A549 (cell line): ENCODE measurements at regions of chr1 and their contacts with region 1.

Region 1: DNA sequence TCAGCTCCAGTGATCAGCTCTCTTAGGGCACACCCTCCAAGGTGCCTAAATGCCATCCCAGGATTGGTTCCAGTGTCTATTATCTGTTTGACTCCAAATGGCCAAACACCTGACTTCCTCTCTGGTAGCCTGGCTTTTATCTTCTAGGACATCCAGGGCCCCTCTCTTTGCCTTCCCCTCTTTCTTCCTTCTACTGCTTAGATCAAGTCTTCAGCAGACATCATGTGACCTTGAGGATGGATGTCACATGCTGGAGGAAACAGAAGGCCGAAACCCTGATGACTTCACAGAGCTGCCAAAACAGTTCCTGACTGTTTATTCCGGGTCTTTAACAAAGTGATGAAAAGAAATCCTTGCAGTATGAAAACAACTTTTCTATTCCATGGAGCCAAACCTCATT is 24.4 kb upstream of the WDR26 start:
- DNase-seq: no peak
- ATAC-seq: no peak
- H3K4me3 ChIP-seq: no peak overlapping the region
- H3K27ac ChIP-seq: no peak overlapping the region
- H3K4me1 ChIP-seq: peaks cover 9% of the 10 kb centered on the region
- CTCF ChIP-seq: no peak
- EP300 ChIP-seq: no peak
- POLR2A ChIP-seq: no peak
- RAD21 ChIP-seq: no peak

Region 2: DNA sequence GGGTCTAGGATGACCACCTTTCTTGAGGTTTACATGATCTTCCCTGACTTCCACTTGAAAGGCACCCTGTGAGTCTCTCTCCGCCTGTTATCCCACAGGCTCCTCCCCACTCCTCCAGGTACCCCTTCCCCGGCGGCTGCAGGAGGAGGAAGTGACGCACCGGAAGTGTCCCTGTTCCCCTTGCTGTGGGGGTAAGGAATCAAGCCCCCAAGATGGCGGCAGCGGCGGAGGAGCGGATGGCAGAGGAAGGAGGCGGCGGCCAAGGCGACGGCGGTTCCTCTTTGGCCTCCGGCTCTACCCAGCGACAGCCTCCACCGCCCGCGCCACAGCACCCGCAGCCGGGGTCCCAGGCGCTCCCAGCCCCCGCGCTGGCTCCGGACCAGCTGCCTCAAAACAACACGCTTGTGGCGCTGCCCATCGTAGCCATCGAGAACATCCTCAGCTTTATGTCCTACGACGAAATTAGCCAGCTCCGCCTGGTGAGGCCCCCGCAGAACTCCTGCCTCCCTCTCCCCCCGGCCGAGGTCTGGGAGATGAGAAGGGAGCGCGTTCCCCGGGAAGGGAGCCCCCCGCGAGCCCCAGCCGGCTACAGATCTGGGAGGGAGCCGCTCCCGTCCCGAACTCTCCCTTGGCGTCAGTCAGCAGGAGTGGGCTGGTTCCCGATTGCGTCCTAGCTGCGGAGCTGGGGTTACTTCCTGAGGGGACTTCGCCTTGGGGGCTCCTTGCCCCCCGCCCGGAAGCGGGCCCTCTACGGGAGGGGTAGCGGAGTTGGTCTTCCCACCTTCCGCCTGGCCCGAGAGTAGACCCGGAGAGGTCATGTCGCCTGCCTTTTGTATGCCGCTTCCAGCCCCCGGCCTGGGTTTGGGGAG is 344.8 kb before region 1 on chr1 and contains the start of gene FBXO28:
- CTCF ChIA-PET with region 1: interaction called, 34 read pairs
- POLR2A ChIA-PET with region 1: no interaction called
- DNase-seq: peak; percentile 96 to 98
- ATAC-seq: peak; percentile 100
- H3K4me3 ChIP-seq: peak within 1 kb of the TSS; percentile 86
- H3K27ac ChIP-seq: peak within 1 kb of the TSS; percentile 96
- H3K4me1 ChIP-seq: peaks cover 14% of the 10 kb centered on the region; the same call in 2 of the 3 replicates
- CTCF ChIP-seq: no peak
- EP300 ChIP-seq: no peak
- POLR2A ChIP-seq: peak; percentile 97
- RAD21 ChIP-seq: no peak
- polyA plus RNA-seq, gene FBXO28: 25.6 and 31.5 TPM in 2 replicates

Region 3: GRCh38 chr1:224392411-224393249 is 66.4 kb before region 1 on chr1:
- CTCF ChIA-PET with region 1: no interaction called
- POLR2A ChIA-PET with region 1: no interaction called
- DNase-seq: no peak
- ATAC-seq: no peak
- H3K4me3 ChIP-seq: no peak overlapping the region
- H3K27ac ChIP-seq: no peak overlapping the region; a peak in 1 of 6 replicates
- H3K4me1 ChIP-seq: 0 out of 3 replicates have a peak, but pooled peaks cover 3% of the 10 kb centered on the region
- CTCF ChIP-seq: no peak
- EP300 ChIP-seq: no peak
- POLR2A ChIP-seq: no peak
- RAD21 ChIP-seq: no peak

Region 4: GRCh38 chr1:224430511-224431113 is 28.4 kb before region 1 on chr1:
- CTCF ChIA-PET with region 1: interaction called, 13 read pairs
- POLR2A ChIA-PET with region 1: interaction called, 8 read pairs
- DNase-seq: peak; percentile 39 to 41
- ATAC-seq: no peak
- H3K4me3 ChIP-seq: no peak overlapping the region
- H3K27ac ChIP-seq: peak overlapping the region in 1 of 2 experiments; percentile 54; a peak in 2 of 6 replicates
- H3K4me1 ChIP-seq: peaks cover 53% of the 10 kb centered on the region
- CTCF ChIP-seq: no peak
- EP300 ChIP-seq: no peak
- POLR2A ChIP-seq: no peak
- RAD21 ChIP-seq: no peak

Region 5: GRCh38 chr1:224447251-224447650 is 11.7 kb before region 1 on chr1:
- CTCF ChIA-PET with region 1: interaction called, 30 read pairs
- POLR2A ChIA-PET with region 1: no interaction called
- DNase-seq: no peak
- ATAC-seq: no peak
- H3K4me3 ChIP-seq: no peak overlapping the region
- H3K27ac ChIP-seq: no peak overlapping the region
- H3K4me1 ChIP-seq: peaks cover 3% of the 10 kb centered on the region; the same call in 1 of the 3 replicates
- CTCF ChIP-seq: no peak
- EP300 ChIP-seq: no peak
- POLR2A ChIP-seq: no peak
- RAD21 ChIP-seq: no peak

Region 6: GRCh38 chr1:224521904-224522734 is 63.1 kb after region 1 on chr1:
- CTCF ChIA-PET with region 1: no interaction called
- POLR2A ChIA-PET with region 1: no interaction called
- DNase-seq: no peak
- ATAC-seq: peak in 1 of 2 experiments; percentile 61; a peak in 3 of 6 replicates
- H3K4me3 ChIP-seq: no peak overlapping the region
- H3K27ac ChIP-seq: no peak overlapping the region
- H3K4me1 ChIP-seq: no peaks in the 10 kb centered on the region
- CTCF ChIP-seq: no peak
- EP300 ChIP-seq: no peak
- POLR2A ChIP-seq: no peak
- RAD21 ChIP-seq: no peak

Region 7: GRCh38 chr1:224707843-224708725 is 249.1 kb after region 1 on chr1:
- CTCF ChIA-PET with region 1: no interaction called
- POLR2A ChIA-PET with region 1: no interaction called
- DNase-seq: no peak
- ATAC-seq: peak in 1 of 2 experiments; percentile 57; a peak in 3 of 6 replicates
- H3K4me3 ChIP-seq: no peak overlapping the region
- H3K27ac ChIP-seq: no peak overlapping the region
- H3K4me1 ChIP-seq: no peaks in the 10 kb centered on the region
- CTCF ChIP-seq: no peak
- EP300 ChIP-seq: no peak
- POLR2A ChIP-seq: no peak
- RAD21 ChIP-seq: no peak

Region 8: GRCh38 chr1:224922404-224923164 is 463.6 kb after region 1 on chr1:
- CTCF ChIA-PET with region 1: interaction called, 11 read pairs
- POLR2A ChIA-PET with region 1: no interaction called
- DNase-seq: peak; percentile 48 to 57
- ATAC-seq: peak; percentile 92 to 93
- H3K4me3 ChIP-seq: no peak overlapping the region
- H3K27ac ChIP-seq: no peak overlapping the region
- H3K4me1 ChIP-seq: no peaks in the 10 kb centered on the region
- CTCF ChIP-seq: peak; percentile 78
- EP300 ChIP-seq: no peak
- POLR2A ChIP-seq: no peak
- RAD21 ChIP-seq: peak; percentile 79 to 86